ENCODE measurements at regions of chr4 and their contacts with region 1.

Region 1: GRCh38 chr4:8201321-8201781 is 2.3 kb downstream of the SH3TC1 start:
- DNase-seq: no peak
- H3K4me3 ChIP-seq: peak overlapping the region in 46 of 59 donors; percentile 14 to 66 (median 47)
- H3K27ac ChIP-seq: peak overlapping the region in 28 of 59 donors; percentile 4 to 87 (median 68)
- H3K27me3 ChIP-seq: no peaks in the 10 kb centered on the region
- CTCF ChIP-seq: no peak

Region 2: DNA sequence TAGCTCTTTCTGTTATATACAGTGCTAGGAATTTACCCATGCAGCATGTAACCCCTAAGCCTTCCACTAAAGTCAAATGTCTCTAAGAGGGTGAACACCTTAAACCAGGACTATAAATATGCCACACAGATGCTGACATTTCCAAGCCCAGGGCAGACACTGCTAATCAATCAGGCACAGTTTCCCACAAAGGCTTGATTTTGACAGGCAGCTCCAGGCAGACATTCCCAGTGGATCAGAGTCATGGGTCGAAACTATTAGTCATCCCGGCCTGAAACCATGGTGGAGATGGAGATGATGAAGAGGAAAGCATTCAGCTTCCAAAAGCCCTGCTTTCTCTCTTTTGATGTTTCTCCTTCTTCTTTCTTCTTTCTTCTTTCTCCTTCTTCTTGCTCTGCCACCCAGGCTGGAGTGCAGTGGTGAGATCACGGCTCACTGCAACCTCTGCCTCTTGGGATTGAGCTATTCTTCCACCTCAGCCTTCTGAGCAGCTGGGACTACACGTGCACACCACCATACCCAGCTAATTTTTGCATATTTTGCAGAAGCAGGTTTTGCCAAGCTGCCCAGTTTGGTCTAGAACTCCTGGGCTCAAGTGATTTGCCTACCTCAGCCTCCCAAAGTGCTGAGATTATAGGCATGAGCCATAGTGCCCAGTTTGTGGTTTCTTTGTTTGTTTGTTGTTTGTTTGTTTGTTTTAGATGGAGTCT is 1030.0 kb before region 1 on chr4:
- intact Hi-C with region 1: loop called in 1 of 2 experiments (anchors 10 kb)
- DNase-seq: no peak
- H3K4me3 ChIP-seq: no peak overlapping the region
- H3K27ac ChIP-seq: no peak overlapping the region
- H3K27me3 ChIP-seq: no peaks in the 10 kb centered on the region
- CTCF ChIP-seq: no peak

Region 3: DNA sequence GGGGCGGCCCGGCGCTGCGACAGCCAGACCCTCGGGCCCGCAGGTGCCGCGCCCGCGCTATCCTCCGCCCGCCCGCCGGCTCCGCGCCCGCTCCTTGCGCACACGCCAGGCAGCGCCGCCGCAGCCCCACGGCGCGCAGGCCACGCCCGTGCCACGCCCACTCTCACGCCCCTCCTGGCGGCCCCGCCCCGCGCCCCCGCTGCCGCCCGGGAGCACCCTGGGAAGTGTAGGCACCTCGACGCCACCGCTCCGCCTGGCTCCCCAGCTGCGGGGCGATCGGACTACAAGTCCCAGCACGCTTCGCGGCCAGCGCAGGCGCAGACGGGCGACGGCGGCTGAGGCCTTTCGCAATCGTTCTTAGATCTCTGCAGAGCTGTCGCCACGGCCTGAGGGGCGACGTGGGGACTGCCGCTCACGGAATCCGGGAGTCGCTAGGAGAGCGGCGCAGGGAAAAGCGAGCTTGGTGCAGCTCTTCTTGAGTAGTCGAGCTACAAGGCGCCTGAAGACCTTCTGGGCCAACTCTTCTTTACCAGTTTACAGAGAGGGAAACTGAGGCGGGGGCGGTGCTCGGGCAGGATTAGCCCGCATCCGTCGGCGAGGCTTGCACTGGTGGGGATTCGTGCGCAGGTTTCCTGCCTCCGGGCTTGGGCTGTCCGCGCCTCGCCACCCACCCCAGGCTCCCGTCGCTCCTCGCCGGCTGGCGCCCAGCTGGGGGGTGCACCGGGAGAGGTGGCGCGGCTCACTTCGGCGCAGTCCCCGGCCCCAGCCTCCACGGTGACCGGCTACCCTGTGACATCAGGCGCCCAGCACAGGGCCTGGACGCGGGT is 42.4 kb before region 1 on chr4 and contains the start of gene ABLIM2:
- intact Hi-C with region 1: no loop called
- DNase-seq: peak; percentile 96 to 100 (median 98)
- H3K4me3 ChIP-seq: peak within 1 kb of the TSS; percentile 56 to 99 (median 92)
- H3K27ac ChIP-seq: peak within 1 kb of the TSS in 58 of 59 donors; percentile 1 to 94 (median 87)
- H3K27me3 ChIP-seq: no peaks in the 10 kb centered on the region
- CTCF ChIP-seq: peak in 20 of 56 donors; percentile 7 to 50 (median 28)
- total RNA-seq, gene ABLIM2: 43.2 to 185 (median 130) TPM

Region 4: GRCh38 chr4:8247047-8247930 is 45.9 kb after region 1 on chr4:
- intact Hi-C with region 1: no loop called
- DNase-seq: no peak
- H3K4me3 ChIP-seq: no peak overlapping the region
- H3K27ac ChIP-seq: no peak overlapping the region
- H3K27me3 ChIP-seq: no peaks in the 10 kb centered on the region
- CTCF ChIP-seq: no peak